Prostate gland (tissue), 2 donors: ENCODE measurements at regions of chr5 and their contacts with region 1.

Region 1: DNA sequence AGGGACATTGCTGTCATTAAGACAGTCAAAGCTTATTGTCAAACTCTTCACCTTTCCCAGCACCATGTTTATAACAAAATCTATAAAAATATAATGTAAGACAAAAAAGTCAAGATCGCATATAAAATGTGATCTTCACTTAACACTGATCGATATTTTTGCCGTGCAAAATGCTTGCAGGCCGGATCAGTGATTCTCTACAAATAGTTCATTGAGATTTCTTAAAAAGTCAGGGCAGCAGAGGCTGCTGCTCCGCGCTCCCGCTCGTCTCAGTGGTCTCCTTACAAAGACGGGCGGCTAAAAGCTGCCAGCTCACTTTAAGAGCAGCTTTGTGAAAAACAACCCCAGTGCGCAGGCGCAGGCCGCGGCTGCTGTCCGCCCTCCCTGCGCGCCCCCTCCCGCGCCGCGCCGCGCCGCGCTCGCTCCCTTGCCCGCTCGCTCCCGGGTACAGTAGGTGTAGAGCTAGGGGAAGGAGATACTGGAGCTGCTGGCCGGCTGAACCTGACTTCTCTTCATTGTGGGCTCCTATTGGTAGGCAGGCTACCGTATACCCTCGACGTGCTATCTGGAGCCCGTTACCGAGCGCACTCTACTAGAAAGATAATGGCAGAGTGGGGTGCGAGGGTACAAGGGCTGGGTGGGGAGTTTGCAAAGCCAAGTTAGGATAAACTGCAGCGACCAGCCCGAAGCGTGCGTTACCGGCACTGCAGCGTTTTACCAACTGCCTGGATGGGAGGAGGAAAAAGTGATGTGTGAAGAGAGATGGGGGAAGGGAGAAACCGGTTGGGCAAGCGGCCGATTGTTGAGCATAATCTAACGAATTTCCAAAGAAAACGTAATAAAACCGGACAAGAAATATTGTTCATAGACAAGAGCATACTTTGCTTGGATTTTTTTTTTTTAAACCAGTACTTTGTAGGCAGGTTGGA is at the start of gene ARRDC3:
- DNase-seq: peak; percentile 95
- H3K4me3 ChIP-seq: peak within 1 kb of the TSS; percentile 70 to 81
- H3K27ac ChIP-seq: peak within 1 kb of the TSS; percentile 99 to 100
- H3K4me1 ChIP-seq: no peaks in the 10 kb centered on the region
- H3K27me3 ChIP-seq: no peaks in the 10 kb centered on the region
- CTCF ChIP-seq: peak in 2 of 4 experiments; percentile 30 to 37
- POLR2A ChIP-seq: peak; percentile 94
- total RNA-seq, gene ARRDC3: 31.4 to 54.9 TPM

Region 2: DNA sequence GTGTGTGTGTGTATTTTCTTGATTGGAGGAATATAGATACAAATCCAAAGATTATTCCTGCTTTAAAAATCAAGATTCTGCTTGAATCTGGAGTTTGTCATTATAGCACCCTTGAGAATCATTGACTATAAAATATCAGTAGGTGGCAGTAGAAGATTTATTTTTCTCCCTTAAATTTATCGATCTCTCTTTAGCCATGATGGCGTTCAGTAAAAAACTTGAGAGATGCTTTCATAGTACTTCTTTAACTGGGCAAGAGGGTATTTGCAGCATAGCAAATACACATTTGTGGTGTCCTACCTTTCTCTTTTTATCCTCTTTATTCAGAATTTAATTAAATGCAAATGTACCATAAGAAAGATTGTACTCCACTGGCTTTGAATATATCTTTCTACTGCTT is 517.0 kb before region 1 on chr5:
- intact Hi-C with region 1: loop called (anchors 2 kb)
- DNase-seq: no peak
- H3K4me3 ChIP-seq: no peak overlapping the region
- H3K27ac ChIP-seq: no peak overlapping the region
- H3K4me1 ChIP-seq: no peaks in the 10 kb centered on the region
- H3K27me3 ChIP-seq: no peaks in the 10 kb centered on the region
- CTCF ChIP-seq: peak in 3 of 4 experiments; percentile 42 to 70 (median 59)
- POLR2A ChIP-seq: no peak

Region 3: GRCh38 chr5:91049800-91050199 is 333.5 kb before region 1 on chr5:
- intact Hi-C with region 1: loop called (anchors 5 kb)
- DNase-seq: peak; percentile 20
- H3K4me3 ChIP-seq: no peak overlapping the region
- H3K27ac ChIP-seq: no peak overlapping the region
- H3K4me1 ChIP-seq: no peaks in the 10 kb centered on the region
- H3K27me3 ChIP-seq: no peaks in the 10 kb centered on the region
- CTCF ChIP-seq: no peak
- POLR2A ChIP-seq: no peak

Region 4: GRCh38 chr5:91119981-91120850 is 263.1 kb before region 1 on chr5:
- intact Hi-C with region 1: loop called (anchors 5 kb)
- DNase-seq: no peak
- H3K4me3 ChIP-seq: no peak overlapping the region
- H3K27ac ChIP-seq: peak overlapping the region; percentile 30 to 54
- H3K4me1 ChIP-seq: peaks cover 7% of the 10 kb centered on the region
- H3K27me3 ChIP-seq: no peaks in the 10 kb centered on the region
- CTCF ChIP-seq: no peak
- POLR2A ChIP-seq: no peak

Region 5: GRCh38 chr5:91311697-91312501 is 71.4 kb before region 1 on chr5:
- intact Hi-C with region 1: loop called (anchors 5 kb)
- DNase-seq: peak; percentile 13
- H3K4me3 ChIP-seq: no peak overlapping the region
- H3K27ac ChIP-seq: peak overlapping the region; percentile 31 to 44
- H3K4me1 ChIP-seq: no peaks in the 10 kb centered on the region
- H3K27me3 ChIP-seq: no peaks in the 10 kb centered on the region
- CTCF ChIP-seq: peak in 1 of 4 experiments; percentile 6
- POLR2A ChIP-seq: peak; percentile 15

Region 6: DNA sequence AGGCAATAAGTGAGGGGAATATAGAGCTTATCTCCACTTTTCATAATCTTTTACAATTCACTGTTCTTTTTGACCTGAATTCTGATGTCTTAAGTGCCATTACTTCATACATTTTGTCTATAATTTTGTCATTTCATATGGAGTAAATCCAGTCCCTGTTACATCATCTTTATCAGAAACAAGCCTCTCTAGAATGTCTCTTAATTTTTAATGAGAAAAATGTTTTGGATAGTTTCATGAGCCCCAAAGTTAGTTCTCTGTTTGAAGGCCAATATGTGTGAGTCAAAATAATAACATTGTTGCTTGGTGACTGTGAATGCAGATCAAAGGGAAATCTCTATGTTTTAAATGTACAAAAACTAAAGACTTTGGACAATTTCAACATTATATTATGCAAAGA is 329.4 kb after region 1 on chr5:
- intact Hi-C with region 1: no loop called
- DNase-seq: no peak
- H3K4me3 ChIP-seq: no peak overlapping the region
- H3K27ac ChIP-seq: no peak overlapping the region
- H3K4me1 ChIP-seq: no peaks in the 10 kb centered on the region
- H3K27me3 ChIP-seq: no peaks in the 10 kb centered on the region
- CTCF ChIP-seq: no peak
- POLR2A ChIP-seq: no peak